ENCODE measurements at regions of chr2 and their contacts with region 1.

Region 1: DNA sequence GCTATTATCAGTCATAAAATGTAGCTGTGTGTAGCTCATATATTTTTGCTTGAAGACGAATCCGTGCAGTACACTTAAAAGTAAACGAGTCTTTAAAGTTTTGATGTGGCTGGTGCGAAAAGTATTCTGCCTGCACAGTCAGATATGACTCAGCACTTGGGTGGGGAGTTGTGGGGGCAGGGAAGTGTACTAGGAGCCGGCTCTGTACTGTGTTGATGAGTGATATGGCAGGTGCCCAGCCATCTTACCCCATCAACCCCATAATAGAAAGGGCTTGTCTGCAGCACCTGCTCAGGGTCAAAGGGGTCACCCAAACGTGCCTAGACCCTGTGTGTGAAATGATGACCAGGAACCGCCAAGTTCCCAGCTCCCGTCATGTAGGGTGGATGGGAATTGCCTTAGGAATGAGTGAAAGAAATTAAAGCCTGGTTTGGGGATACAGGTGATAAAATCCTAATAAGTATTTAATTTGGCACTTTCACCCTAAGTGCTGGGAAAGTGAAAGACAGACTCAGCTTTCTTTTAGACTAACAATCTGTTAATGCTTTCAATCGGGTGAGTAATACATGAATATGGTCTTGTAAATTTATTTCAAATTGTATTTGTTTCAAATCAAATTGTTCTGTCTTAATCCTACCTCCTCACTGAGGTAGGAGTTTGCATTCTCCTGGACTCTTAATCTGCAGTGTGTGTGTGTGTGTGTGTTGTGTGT is 48.0 kb downstream of the BCL2L11 start:
- DNase-seq: peak; percentile 68
- ATAC-seq: peak; percentile 95
- H3K4me3 ChIP-seq: no peak overlapping the region
- H3K27ac ChIP-seq: no peak overlapping the region
- H3K4me1 ChIP-seq: peaks cover 17% of the 10 kb centered on the region
- H3K27me3 ChIP-seq: peaks cover 0 to 3% of the 10 kb centered on the region in 2 experiments; a peak in 1 of 4 replicates
- CTCF ChIP-seq: no peak
- EP300 ChIP-seq: peak; percentile 77 to 80; a peak in 3 of 4 replicates
- POLR2A ChIP-seq: no peak
- RAD21 ChIP-seq: no peak

Region 2: GRCh38 chr2:111148925-111149324 is 19.8 kb before region 1 on chr2:
- CTCF ChIA-PET with region 1: interaction called, 4 read pairs
- POLR2A ChIA-PET with region 1: interaction called, 11 read pairs
- RAD21 ChIA-PET with region 1: interaction called, 17 read pairs
- SMC1A ChIA-PET with region 1: interaction called, 23 read pairs
- in situ Hi-C with region 1: no loop called
- intact Hi-C with region 1: no loop called
- DNase-seq: no peak
- ATAC-seq: no peak
- H3K4me3 ChIP-seq: no peak overlapping the region
- H3K27ac ChIP-seq: no peak overlapping the region
- H3K4me1 ChIP-seq: peaks cover 6% of the 10 kb centered on the region
- H3K27me3 ChIP-seq: no peaks in the 10 kb centered on the region
- CTCF ChIP-seq: no peak
- EP300 ChIP-seq: no peak
- POLR2A ChIP-seq: no peak
- RAD21 ChIP-seq: no peak

Region 3: DNA sequence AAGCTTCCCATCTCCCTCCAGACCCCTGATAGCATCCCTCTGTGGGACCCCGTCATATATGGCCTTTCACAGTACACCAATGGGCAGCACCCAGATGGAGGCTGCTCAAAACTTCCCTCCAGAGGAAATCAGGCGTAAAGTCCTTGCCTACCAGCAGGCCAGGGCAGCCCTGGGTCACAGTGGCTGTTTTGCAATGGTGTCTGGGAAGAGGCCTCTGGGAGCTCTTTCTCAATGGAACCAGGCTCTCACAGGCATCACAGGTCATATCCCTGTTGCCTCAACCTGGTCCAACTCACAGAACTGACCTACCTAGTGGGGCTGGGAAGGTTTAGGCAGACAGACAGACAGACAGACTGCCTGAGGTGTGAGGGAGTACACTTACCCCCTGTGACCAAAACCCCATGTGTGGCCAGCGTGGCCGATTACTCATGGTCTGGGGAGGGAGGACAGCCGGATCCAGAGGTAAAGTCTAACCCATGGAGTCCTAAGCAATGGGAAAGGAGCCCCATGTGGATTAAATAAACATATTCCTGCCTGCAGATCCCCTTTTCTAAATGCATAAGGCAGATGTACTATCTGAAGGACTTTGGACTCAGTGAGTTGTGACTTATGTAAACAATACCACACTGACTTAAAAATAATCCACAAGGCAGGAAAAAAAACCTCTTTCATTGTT is 10.2 kb after region 1 on chr2:
- CTCF ChIA-PET with region 1: no interaction called
- POLR2A ChIA-PET with region 1: interaction called, 6 read pairs
- RAD21 ChIA-PET with region 1: interaction called, 11 read pairs
- SMC1A ChIA-PET with region 1: interaction called, 75 read pairs
- in situ Hi-C with region 1: no loop called
- intact Hi-C with region 1: no loop called
- DNase-seq: no peak
- ATAC-seq: peak; percentile 37
- H3K4me3 ChIP-seq: no peak overlapping the region
- H3K27ac ChIP-seq: no peak overlapping the region
- H3K4me1 ChIP-seq: no peaks in the 10 kb centered on the region
- H3K27me3 ChIP-seq: peaks cover 0 to 8% of the 10 kb centered on the region in 2 experiments; a peak in 3 of 4 replicates
- CTCF ChIP-seq: no peak
- EP300 ChIP-seq: no peak
- POLR2A ChIP-seq: no peak
- RAD21 ChIP-seq: no peak

Region 4: GRCh38 chr2:111194835-111195621 is 26.3 kb after region 1 on chr2:
- CTCF ChIA-PET with region 1: interaction called, 28 read pairs
- POLR2A ChIA-PET with region 1: interaction called, 20 read pairs
- RAD21 ChIA-PET with region 1: interaction called, 107 read pairs
- SMC1A ChIA-PET with region 1: interaction called, 137 read pairs
- in situ Hi-C with region 1: no loop called
- intact Hi-C with region 1: loop called (anchors 1 kb)
- DNase-seq: peak; percentile 98
- ATAC-seq: peak; percentile 88
- H3K4me3 ChIP-seq: no peak overlapping the region
- H3K27ac ChIP-seq: peak overlapping the region; percentile 41; the same call in 1 of the 2 replicates
- H3K4me1 ChIP-seq: peaks cover 36% of the 10 kb centered on the region
- H3K27me3 ChIP-seq: no peaks in the 10 kb centered on the region
- CTCF ChIP-seq: peak; percentile 42 to 46 (median 45); a peak in 5 of 6 replicates
- EP300 ChIP-seq: peak; percentile 76 to 96
- POLR2A ChIP-seq: no peak
- RAD21 ChIP-seq: peak; percentile 47

Region 5: DNA sequence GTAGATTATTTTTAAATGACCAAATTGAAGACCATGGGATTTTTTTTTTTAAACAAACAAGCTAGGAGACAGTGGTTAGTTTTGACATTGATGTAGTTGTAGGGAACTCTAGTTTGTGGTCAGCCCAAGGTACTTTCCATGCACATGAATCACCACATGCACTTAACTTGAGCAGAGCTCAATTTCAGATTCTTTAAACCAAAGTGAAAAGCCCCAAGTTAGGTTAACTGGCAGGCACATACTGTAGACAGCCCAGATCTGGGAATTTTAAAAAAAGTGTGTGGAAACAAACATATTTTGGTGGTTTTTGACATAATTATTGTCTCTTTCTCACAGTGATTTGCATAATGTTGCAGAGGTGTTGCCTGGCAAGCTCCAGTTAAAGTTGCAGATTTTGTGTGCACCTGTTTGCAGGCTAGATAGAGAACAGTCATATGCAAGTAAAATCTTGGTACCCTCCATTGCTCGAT is 40.4 kb after region 1 on chr2:
- CTCF ChIA-PET with region 1: interaction called, 5 read pairs
- POLR2A ChIA-PET with region 1: interaction called, 8 read pairs
- RAD21 ChIA-PET with region 1: interaction called, 31 read pairs
- SMC1A ChIA-PET with region 1: interaction called, 18 read pairs
- in situ Hi-C with region 1: no loop called
- intact Hi-C with region 1: no loop called
- DNase-seq: peak; percentile 97
- ATAC-seq: peak; percentile 95
- H3K4me3 ChIP-seq: no peak overlapping the region
- H3K27ac ChIP-seq: no peak overlapping the region
- H3K4me1 ChIP-seq: peaks cover 7% of the 10 kb centered on the region
- H3K27me3 ChIP-seq: no peaks in the 10 kb centered on the region
- CTCF ChIP-seq: no peak
- EP300 ChIP-seq: peak; percentile 95 to 97
- POLR2A ChIP-seq: no peak
- RAD21 ChIP-seq: 0 out of 2 replicates have a peak, but pooled peaks have one; percentile 1

Region 6: GRCh38 chr2:111239107-111239506 is 70.4 kb after region 1 on chr2:
- CTCF ChIA-PET with region 1: no interaction called
- POLR2A ChIA-PET with region 1: interaction called, 5 read pairs
- RAD21 ChIA-PET with region 1: interaction called, 3 read pairs
- SMC1A ChIA-PET with region 1: interaction called, 11 read pairs
- in situ Hi-C with region 1: no loop called
- intact Hi-C with region 1: no loop called
- DNase-seq: no peak
- ATAC-seq: peak; percentile 100
- H3K4me3 ChIP-seq: no peak overlapping the region
- H3K27ac ChIP-seq: no peak overlapping the region
- H3K4me1 ChIP-seq: peaks cover 9% of the 10 kb centered on the region
- H3K27me3 ChIP-seq: no peaks in the 10 kb centered on the region
- CTCF ChIP-seq: no peak
- EP300 ChIP-seq: peak in 1 of 2 experiments; percentile 57; a peak in 1 of 4 replicates
- POLR2A ChIP-seq: no peak
- RAD21 ChIP-seq: no peak

Measured in GM12878 (cell line).